Caco-2 (cell line): ENCODE measurements at regions of chr6 and their contacts with region 1.

Region 1: DNA sequence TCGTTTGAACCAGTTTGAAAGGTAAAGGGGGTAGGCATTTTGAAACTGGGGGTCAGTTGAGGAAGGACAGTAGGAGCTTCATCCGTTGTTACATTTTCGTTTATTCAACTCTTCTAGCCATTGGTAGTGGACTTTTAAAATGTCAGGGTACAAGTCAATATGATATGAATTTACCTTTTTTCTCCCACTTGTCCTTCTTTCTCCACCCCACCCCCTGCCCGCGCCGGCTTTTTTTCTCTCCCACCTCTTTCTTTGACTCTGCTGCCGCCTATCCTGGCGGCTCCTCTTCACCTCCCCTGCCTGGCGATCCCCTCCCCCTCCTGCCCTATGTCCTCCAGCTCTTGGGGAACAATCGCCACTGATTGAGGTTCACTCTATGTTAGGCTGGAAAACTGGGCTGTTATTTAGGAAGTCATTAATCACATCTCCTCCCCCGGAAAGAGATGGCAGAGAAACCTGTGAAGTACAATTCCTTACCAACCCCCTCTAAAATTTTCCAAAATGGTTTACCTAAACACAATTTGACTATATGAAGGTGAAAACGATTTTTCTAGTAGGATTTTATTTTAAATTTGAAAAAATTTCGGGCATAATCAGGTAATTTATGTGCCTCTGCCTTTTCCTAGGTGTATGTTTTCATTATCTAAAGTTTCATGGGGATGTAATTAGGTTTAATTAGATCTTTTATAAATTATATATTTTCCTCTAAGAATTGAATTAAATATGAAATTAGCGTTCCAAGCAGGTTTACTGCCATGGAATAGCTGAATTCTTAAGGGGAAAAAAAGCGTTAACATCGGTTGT is 778 bp upstream of the LIN28B start:
- DNase-seq: peak; percentile 42 to 60
- H3K4me3 ChIP-seq: peak overlapping the region; percentile 63
- H3K4me3 Mint-ChIP-seq: peak overlapping the region; percentile 91
- H3K27ac Mint-ChIP-seq: peak overlapping the region; percentile 95
- H3K4me1 ChIP-seq: 0 out of 2 replicates have a peak, but pooled peaks cover 6% of the 10 kb centered on the region
- H3K4me1 Mint-ChIP-seq: peaks cover 6% of the 10 kb centered on the region
- H3K27me3 ChIP-seq: no peaks in the 10 kb centered on the region
- H3K27me3 Mint-ChIP-seq: no peaks in the 10 kb centered on the region
- CTCF ChIP-seq: peak in 1 of 2 experiments; percentile 14

Region 2: DNA sequence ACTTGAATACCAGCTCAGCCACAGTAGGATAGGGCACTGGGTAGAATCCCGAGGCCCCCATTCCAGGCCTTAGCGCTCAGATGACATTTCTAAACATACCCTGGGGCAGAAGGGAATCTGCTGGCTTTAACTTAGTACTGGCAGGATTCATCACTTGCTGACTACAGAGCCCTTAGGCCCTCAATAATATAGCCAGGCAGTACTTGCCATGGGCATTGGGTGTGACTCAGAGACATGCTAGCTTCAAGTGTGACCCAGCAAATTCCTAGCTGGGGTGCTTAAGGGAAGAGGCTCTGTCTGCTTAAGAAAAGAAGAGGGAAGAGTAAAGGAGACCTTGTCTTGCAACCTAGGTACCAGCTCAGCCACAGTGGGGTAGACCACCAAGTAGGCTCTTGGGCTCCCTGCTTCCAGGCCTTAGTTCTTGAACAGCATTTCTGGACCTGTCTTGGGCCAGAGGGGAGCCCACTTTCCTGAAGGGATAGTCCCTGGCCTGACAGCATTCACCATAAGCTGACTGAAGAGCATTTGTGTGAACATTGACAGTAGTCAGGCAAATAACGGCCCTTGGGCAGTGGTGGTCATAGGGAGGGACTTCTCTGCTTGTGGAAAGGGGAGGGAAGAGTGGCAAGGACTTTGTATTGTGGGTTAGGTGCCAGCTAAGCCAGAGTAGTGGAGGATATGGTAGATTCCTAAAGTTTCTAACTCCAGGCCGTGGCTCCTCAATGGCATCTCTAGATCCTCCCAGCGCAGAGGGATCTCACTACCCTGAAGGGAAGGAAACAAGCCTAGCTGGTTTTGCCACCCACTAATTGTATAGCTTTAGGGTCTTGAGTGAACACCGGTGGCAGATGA is 47.9 kb before region 1 on chr6:
- CTCF ChIA-PET with region 1: no interaction called
- POLR2A ChIA-PET with region 1: no interaction called
- intact Hi-C with region 1: loop called (anchors 2 kb)
- DNase-seq: peak in 1 of 2 experiments; percentile 44
- H3K4me3 ChIP-seq: no peak overlapping the region
- H3K4me3 Mint-ChIP-seq: no peak overlapping the region
- H3K27ac Mint-ChIP-seq: peak overlapping the region; percentile 50
- H3K4me1 ChIP-seq: peaks cover 17% of the 10 kb centered on the region
- H3K4me1 Mint-ChIP-seq: peaks cover 22% of the 10 kb centered on the region
- H3K27me3 ChIP-seq: no peaks in the 10 kb centered on the region
- H3K27me3 Mint-ChIP-seq: no peaks in the 10 kb centered on the region
- CTCF ChIP-seq: no peak

Region 3: GRCh38 chr6:105077596-105078385 is 121.7 kb after region 1 on chr6:
- CTCF ChIA-PET with region 1: no interaction called
- POLR2A ChIA-PET with region 1: no interaction called
- intact Hi-C with region 1: no loop called
- DNase-seq: peak in 1 of 2 experiments; percentile 22
- H3K4me3 ChIP-seq: no peak overlapping the region
- H3K4me3 Mint-ChIP-seq: no peak overlapping the region
- H3K27ac Mint-ChIP-seq: no peak overlapping the region
- H3K4me1 ChIP-seq: 0 out of 2 replicates have a peak, but pooled peaks cover 2% of the 10 kb centered on the region
- H3K4me1 Mint-ChIP-seq: peaks cover 7% of the 10 kb centered on the region
- H3K27me3 ChIP-seq: no peaks in the 10 kb centered on the region
- H3K27me3 Mint-ChIP-seq: no peaks in the 10 kb centered on the region
- CTCF ChIP-seq: peak; percentile 44 to 48